ENCODE measurements at regions of chr15 and their contacts with region 1.

Region 1: DNA sequence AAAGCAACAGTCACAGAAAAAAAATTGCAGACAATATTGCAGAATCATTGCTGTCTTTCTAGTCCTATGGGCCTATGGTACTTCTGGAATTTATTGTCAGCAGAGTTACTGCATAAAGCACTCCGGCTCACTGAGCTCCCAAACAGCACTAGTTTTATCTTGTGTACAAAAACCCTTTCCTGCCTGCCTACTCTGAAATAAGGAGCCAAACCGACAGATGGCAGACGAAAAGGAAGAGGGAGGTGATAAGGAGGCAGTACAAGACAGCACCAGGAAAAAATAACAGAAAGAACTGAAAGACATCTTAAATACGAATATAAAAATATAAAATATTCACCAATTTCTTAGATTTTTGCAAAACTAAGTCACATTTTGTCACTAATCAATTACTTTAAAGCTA is 15.6 kb downstream of the HERC1 start:
- DNase-seq: no peak
- H3K4me3 ChIP-seq: no peak overlapping the region
- H3K4me3 Mint-ChIP-seq: peak overlapping the region in 5 of 8 donors; percentile 36 to 60 (median 59)
- H3K27ac ChIP-seq: no peak overlapping the region
- H3K27ac Mint-ChIP-seq: no peak overlapping the region
- H3K4me1 ChIP-seq: peaks cover 90% of the 10 kb centered on the region
- H3K4me1 Mint-ChIP-seq: peaks cover 56 to 90% (median 72%) of the 10 kb centered on the region in 4 donors
- H3K27me3 ChIP-seq: no peaks in the 10 kb centered on the region
- H3K27me3 Mint-ChIP-seq: no peaks in the 10 kb centered on the region

Region 2: DNA sequence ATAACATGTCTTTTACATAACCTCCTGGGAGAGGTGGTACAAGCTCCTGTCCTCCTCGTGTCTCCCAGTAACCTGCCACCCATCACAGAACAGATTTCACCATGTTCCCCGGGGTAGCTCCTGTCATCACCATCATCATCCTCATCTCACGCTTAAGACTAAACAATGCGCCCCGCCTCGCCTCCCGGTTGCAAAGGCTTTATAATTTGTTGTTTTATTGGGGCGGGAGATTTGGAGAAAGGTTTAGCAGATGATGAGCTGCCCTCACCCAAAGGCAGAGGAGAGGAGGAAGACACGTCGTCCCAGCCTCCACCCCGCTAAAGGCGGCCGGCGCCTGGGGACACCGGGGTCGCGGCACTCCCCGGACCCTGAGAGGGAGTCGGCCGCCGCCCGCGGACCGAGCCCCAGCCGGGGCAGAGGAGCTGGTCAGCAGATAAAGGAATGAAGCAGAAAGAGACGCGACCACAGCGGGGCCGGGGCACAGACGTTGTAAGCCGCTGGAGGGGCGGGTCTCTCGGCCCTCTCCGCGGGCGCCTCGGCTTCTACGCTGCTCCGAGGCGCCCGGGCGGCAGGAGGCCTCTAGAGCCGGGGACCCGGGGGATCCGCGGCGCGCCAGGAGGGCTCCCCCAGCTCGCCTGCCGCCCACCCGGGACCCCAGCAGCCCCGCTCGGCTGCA is 15.0 kb after region 1 on chr15:
- CTCF ChIA-PET with region 1: no interaction called
- POLR2A ChIA-PET with region 1: interaction called, 11 read pairs
- intact Hi-C with region 1: no loop called
- DNase-seq: peak in 4 of 5 donors; percentile 40 to 53 (median 46)
- H3K4me3 ChIP-seq: peak overlapping the region; percentile 53 to 69
- H3K4me3 Mint-ChIP-seq: peak overlapping the region; percentile 94 to 98 (median 96)
- H3K27ac ChIP-seq: peak overlapping the region; percentile 94
- H3K27ac Mint-ChIP-seq: peak overlapping the region; percentile 95 to 100 (median 97)
- H3K4me1 ChIP-seq: peaks cover 56% of the 10 kb centered on the region
- H3K4me1 Mint-ChIP-seq: peaks cover 39 to 62% (median 48%) of the 10 kb centered on the region in 4 donors
- H3K27me3 ChIP-seq: no peaks in the 10 kb centered on the region
- H3K27me3 Mint-ChIP-seq: no peaks in the 10 kb centered on the region